ENCODE measurements at regions of chr2 and their contacts with region 1.

Region 1: GRCh38 chr2:216057688-216058193 is 23.9 kb downstream of the PECR start:
- DNase-seq: peak; percentile 40 to 84 (median 54)
- ATAC-seq: peak; percentile 96
- H3K4me3 ChIP-seq: peak overlapping the region; percentile 36
- H3K4me3 Mint-ChIP-seq: peak overlapping the region; percentile 76
- H3K27ac ChIP-seq: peak overlapping the region; percentile 70 to 86
- H3K27ac Mint-ChIP-seq: peak overlapping the region; percentile 99
- H3K4me1 ChIP-seq: peaks cover 11% of the 10 kb centered on the region
- H3K4me1 Mint-ChIP-seq: peaks cover 42% of the 10 kb centered on the region
- H3K27me3 ChIP-seq: no peaks in the 10 kb centered on the region
- H3K27me3 Mint-ChIP-seq: no peaks in the 10 kb centered on the region
- CTCF ChIP-seq: no peak

Region 2: DNA sequence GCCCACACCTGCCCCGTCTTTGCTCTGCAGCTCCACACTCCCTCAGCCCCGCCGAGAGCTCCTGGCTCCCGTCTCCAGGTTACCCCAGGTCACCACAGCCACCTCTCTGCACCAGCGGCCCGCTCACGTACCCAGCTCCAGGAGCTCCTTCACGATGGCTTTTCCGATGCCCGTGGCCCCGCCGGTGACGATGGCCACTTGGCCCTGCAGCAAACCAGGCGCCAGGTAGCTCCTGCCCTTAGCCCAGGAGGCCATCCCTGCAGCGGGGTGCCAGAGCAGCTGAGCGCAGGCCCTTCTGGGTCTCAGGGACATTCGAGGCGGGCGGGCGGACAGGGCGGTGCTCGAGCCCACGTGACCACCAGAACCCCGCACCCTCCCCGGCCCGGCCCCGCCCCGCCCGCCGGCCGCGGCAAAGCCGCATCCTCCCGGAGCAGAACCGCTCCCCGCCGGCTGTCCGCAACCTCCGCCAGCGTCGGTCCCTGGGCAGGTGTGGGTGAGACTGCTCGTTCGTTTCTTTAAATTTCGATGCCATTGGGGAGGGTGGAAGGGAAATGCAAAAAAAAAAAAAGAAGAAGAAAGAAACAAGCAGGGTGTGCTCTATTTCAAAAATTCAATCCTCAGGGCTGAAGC is 23.9 kb after region 1 on chr2 and contains the starts of genes PECR and TMEM169:
- CTCF ChIA-PET with region 1: interaction called, 5 read pairs
- POLR2A ChIA-PET with region 1: interaction called, 17 read pairs
- intact Hi-C with region 1: no loop called
- DNase-seq: peak; percentile 52 to 85 (median 70)
- ATAC-seq: peak; percentile 79
- H3K4me3 ChIP-seq: peak within 1 kb of the TSS; percentile 96
- H3K4me3 Mint-ChIP-seq: peak within 1 kb of the TSS; percentile 87
- H3K27ac ChIP-seq: peak within 1 kb of the TSS; percentile 69 to 79
- H3K27ac Mint-ChIP-seq: peak within 1 kb of the TSS; percentile 82
- H3K4me1 ChIP-seq: peaks cover 49% of the 10 kb centered on the region
- H3K4me1 Mint-ChIP-seq: peaks cover 66% of the 10 kb centered on the region
- H3K27me3 ChIP-seq: no peaks in the 10 kb centered on the region
- H3K27me3 Mint-ChIP-seq: no peaks in the 10 kb centered on the region
- CTCF ChIP-seq: no peak
- total RNA-seq, gene PECR: 9.1 to 10.3 TPM
- total RNA-seq, gene TMEM169: 0.27 to 0.53 TPM

Measured in CD4-positive, alpha-beta T cell (primary cell).